Activated naive CD4-positive, alpha-beta T cell treated with anti-CD3 and anti-CD28 coated beads for 36 hours (primary cell): ENCODE measurements at regions of chr10 and their contacts with region 1.

Region 1: DNA sequence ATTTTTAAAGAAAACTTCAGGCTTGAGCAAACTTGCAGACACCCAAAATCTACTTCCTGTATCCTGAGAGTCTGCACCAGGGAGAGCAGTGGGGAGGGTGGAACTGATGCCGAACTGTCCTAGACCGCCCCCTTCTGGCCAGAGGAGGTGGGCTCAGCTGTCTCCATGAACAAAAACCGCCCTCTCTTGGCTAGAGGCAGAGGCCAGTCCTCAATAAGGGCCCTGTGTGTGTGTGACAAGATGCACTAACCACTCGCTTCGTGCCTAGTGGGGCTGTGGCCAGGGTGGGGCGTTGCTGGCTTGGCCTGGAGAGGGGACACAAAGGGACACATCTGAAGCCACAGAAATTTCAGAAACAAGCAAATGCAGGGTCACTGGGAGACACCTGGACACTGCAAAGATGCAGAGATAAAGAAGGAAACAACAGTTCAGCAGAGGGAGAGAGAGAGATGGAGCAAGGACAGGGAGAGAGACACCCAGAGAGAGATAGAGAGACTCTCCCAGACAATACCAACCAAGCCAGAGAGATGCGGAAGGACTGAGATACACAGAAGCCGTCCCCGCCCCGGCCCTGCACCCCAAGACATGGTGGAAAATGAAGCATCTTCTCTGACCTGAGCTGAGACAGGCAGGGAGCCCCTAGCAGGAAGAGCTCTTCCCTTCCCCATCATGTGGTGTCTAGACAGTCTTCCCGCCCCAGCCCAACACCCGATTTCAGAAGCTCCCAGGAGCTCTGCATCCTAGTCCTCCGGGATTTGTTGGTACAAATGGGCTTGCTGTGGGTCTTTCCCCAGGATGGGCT is 22.7 kb upstream of the FXYD4 start:
- DNase-seq: peak; percentile 93
- H3K4me3 Mint-ChIP-seq: no peak overlapping the region
- H3K27ac Mint-ChIP-seq: no peak overlapping the region
- H3K4me1 Mint-ChIP-seq: peaks cover 16% of the 10 kb centered on the region
- H3K27me3 Mint-ChIP-seq: peaks cover 19% of the 10 kb centered on the region

Region 2: DNA sequence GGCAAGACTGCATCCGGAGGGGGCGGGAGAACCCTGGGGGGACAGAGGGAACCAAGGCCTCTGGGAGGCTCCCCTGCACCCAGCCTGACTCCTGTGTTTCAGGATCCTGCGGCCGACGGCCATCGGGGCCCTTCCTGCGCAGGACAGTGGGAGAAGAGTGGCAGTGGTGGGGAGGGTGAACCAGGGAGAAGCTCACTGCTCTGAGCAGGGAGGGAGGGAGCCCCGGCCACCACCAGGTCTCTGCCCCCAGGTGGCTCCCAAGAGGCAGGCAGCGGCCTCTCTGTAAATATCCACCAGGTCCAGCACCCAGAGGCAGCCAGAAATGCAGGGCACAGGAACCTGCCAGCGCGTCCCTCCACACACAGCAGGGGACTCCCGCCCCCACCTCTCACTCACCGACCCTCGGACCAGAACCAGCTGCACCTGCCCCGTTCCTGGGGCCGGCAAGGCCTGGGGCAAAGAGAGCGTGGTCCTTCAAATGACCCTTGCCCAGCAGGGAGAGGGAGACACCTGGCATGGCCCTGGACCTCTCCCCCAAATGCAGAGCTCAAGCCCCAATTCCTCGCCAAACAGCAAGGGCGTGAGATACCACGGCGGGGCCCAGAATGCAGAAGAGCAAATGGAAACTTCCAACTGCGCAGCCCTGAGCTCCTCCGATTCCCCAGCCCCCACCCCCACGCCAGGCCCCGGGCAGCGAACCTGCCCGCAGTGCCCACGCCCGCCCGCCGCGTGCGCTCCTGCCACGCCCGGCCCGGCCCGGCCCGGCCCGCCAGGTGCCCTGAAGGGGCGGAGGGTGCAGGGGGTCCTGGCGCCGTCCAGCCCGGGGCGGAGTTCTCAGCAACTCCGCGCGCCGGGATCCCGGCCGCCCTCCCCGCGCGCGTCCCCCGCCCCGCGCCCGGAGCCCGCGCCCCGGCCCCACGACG is 82.7 kb before region 1 on chr10:
- CTCF ChIA-PET with region 1: interaction called, 5 read pairs
- intact Hi-C with region 1: loop called (anchors 1 kb)
- DNase-seq: peak; percentile 35
- H3K4me3 Mint-ChIP-seq: peak overlapping the region; percentile 59
- H3K27ac Mint-ChIP-seq: no peak overlapping the region
- H3K4me1 Mint-ChIP-seq: peaks cover 5% of the 10 kb centered on the region
- H3K27me3 Mint-ChIP-seq: peaks cover 45% of the 10 kb centered on the region

Region 3: GRCh38 chr10:43287056-43288007 is 61.4 kb before region 1 on chr10:
- CTCF ChIA-PET with region 1: interaction called, 80 read pairs
- intact Hi-C with region 1: no loop called
- DNase-seq: peak; percentile 68
- H3K4me3 Mint-ChIP-seq: no peak overlapping the region
- H3K27ac Mint-ChIP-seq: peak overlapping the region; percentile 9
- H3K4me1 Mint-ChIP-seq: peaks cover 26% of the 10 kb centered on the region
- H3K27me3 Mint-ChIP-seq: peaks cover 2% of the 10 kb centered on the region

Region 4: DNA sequence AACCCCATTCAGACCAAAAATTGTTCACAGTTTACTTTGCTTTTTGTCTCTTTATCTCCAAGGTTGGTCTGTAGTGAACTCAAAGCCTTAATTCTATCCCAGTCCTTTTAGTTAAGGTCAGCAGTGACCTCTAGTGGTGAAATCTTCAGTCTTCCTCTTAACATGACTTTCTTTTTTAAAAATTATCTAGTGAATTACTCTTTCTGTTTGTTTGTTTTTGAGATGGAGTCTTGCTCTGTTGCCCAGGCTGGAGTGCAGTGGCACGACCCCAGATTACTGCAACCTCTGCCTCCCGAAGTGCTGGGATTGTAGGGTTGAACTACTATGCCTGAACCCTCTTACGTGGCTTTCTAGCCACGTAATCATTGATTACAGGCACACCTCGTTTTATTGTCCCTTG is 113.2 kb after region 1 on chr10:
- CTCF ChIA-PET with region 1: interaction called, 15 read pairs
- intact Hi-C with region 1: loop called (anchors 1 kb)
- DNase-seq: peak; percentile 24
- H3K4me3 Mint-ChIP-seq: no peak overlapping the region
- H3K27ac Mint-ChIP-seq: no peak overlapping the region
- H3K4me1 Mint-ChIP-seq: peaks cover 12% of the 10 kb centered on the region
- H3K27me3 Mint-ChIP-seq: no peaks in the 10 kb centered on the region